PC-3 (cell line): ENCODE measurements at regions of chr6 and their contacts with region 1.

Region 1: DNA sequence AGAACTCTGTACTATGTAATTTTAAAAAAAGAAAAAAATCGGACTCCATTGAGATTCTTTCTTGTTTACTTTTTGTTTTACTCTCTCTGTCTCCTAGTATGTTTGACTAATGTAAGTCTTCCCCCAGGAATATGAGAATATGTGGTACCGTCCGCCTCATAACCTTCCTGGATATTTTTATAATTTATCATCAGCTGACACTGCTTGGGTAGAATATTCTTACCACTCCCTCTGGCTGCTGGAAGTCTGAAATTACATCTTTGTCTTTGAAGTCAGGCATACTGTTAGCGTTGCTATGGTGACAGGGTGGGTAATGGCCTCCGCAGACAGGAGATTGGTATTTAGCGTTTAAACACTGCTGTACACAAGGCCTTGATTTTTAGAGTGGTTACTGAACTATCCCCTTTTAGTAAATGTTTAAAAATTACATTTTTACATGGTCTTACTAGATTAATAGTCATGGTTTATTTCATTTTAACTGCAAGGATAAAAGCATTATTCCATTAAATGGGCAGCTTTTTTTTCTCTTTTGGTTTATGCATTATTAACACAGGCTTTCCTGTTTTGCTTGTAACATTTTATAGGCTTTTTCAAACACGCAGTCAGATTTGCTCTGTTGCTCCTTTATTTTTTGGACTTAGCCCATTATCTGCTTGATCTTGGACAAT is 176.4 kb downstream of the ARID1B start:
- DNase-seq: peak; percentile 89
- ATAC-seq: peak; percentile 61
- H3K4me3 ChIP-seq: peak overlapping the region; percentile 34; the same call in 1 of the 2 replicates
- H3K27ac ChIP-seq: peak overlapping the region; percentile 61
- H3K4me1 ChIP-seq: peaks cover 68% of the 10 kb centered on the region
- H3K27me3 ChIP-seq: no peaks in the 10 kb centered on the region
- CTCF ChIP-seq: peak; percentile 41; the same call in 1 of the 2 replicates

Region 2: DNA sequence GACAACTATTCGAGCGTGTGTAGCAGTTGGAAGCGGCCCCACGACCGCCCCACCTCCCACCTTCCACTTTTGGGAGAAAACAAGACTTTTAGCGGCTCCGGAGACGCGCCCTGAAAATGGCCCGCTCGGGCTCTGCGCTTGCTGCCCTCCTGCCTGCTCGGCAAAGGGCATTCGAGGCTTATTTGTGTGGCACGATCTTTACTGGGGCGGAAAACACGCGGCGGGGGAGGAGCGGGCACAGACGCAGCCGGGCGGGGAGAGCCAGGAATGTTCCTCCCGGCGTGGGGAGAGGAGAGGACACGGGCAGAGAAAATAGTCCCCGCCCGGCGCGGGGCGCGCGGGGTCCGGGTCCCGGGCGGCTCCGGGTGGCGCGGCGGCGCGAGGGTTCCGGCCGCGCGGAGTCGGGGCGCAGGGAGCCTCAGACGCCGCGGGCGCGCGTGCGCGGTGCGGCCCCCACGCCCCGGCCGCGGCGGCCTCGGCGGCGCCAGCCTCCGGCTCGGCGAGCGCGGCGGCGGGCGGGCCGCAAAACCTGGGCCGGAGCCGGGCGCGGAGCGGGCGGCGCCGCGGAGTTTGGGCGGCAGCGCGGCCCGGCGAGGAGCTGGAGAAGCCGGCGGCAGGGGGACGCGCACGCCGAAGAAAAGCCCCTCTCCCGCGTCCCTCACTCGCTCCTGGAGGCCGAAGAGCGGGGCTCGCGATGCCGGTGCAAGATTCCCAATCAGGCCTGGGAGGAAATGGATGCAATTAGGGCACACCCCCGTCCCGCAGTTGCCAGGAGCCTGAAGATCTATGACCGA is 266.4 kb before region 1 on chr6:
- CTCF ChIA-PET with region 1: no interaction called
- POLR2A ChIA-PET with region 1: no interaction called
- intact Hi-C with region 1: loop called (anchors 10 kb)
- DNase-seq: peak; percentile 73
- ATAC-seq: peak; percentile 87
- H3K4me3 ChIP-seq: peak overlapping the region; percentile 91
- H3K27ac ChIP-seq: peak overlapping the region; percentile 90
- H3K4me1 ChIP-seq: peaks cover 16% of the 10 kb centered on the region
- H3K27me3 ChIP-seq: no peaks in the 10 kb centered on the region
- CTCF ChIP-seq: no peak

Region 3: GRCh38 chr6:156866220-156867015 is 87.2 kb before region 1 on chr6:
- CTCF ChIA-PET with region 1: no interaction called
- POLR2A ChIA-PET with region 1: no interaction called
- intact Hi-C with region 1: loop called (anchors 5 kb)
- DNase-seq: peak; percentile 61
- ATAC-seq: peak; percentile 90
- H3K4me3 ChIP-seq: peak overlapping the region; percentile 53
- H3K27ac ChIP-seq: peak overlapping the region; percentile 58
- H3K4me1 ChIP-seq: peaks cover 20% of the 10 kb centered on the region
- H3K27me3 ChIP-seq: no peaks in the 10 kb centered on the region
- CTCF ChIP-seq: peak; percentile 40

Region 4: DNA sequence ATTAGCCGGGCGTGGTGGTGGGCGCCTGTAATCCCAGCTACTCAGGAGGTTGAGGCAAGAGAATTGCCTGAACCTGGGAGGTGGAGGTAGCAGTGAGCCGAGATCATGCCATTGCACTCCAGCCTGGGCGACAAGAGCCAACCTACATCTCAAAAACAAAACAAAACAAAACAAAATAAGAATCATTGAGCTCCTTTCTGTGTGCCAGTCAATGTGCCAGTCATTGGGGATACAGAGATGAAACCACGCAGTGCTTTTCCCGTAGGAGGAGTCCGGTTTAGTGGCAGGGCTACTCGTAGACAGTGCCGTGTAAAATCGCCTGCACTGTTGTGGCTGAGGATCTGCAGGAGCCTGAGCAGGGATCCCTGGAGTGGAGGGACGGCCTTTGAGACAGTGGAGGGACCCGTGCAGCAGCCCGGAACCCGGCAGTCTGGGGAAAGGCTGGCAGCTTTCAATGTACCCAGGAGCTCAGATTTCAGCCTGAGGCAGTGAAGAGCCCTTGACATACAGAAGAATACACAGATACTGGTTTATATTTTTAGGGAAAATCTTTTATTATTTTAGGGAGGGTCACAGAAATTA is 26.8 kb after region 1 on chr6:
- CTCF ChIA-PET with region 1: no interaction called
- POLR2A ChIA-PET with region 1: no interaction called
- intact Hi-C with region 1: loop called (anchors 2 kb)
- DNase-seq: peak; percentile 66
- ATAC-seq: peak; percentile 94
- H3K4me3 ChIP-seq: peak overlapping the region; percentile 7; the same call in 1 of the 2 replicates
- H3K27ac ChIP-seq: peak overlapping the region; percentile 61
- H3K4me1 ChIP-seq: peaks cover 38% of the 10 kb centered on the region
- H3K27me3 ChIP-seq: no peaks in the 10 kb centered on the region
- CTCF ChIP-seq: no peak

Region 5: GRCh38 chr6:156988276-156989158 is 34.9 kb after region 1 on chr6:
- CTCF ChIA-PET with region 1: no interaction called
- POLR2A ChIA-PET with region 1: no interaction called
- intact Hi-C with region 1: loop called (anchors 5 kb)
- DNase-seq: no peak
- ATAC-seq: no peak
- H3K4me3 ChIP-seq: no peak overlapping the region
- H3K27ac ChIP-seq: no peak overlapping the region
- H3K4me1 ChIP-seq: peaks cover 43% of the 10 kb centered on the region
- H3K27me3 ChIP-seq: no peaks in the 10 kb centered on the region
- CTCF ChIP-seq: no peak

Region 6: DNA sequence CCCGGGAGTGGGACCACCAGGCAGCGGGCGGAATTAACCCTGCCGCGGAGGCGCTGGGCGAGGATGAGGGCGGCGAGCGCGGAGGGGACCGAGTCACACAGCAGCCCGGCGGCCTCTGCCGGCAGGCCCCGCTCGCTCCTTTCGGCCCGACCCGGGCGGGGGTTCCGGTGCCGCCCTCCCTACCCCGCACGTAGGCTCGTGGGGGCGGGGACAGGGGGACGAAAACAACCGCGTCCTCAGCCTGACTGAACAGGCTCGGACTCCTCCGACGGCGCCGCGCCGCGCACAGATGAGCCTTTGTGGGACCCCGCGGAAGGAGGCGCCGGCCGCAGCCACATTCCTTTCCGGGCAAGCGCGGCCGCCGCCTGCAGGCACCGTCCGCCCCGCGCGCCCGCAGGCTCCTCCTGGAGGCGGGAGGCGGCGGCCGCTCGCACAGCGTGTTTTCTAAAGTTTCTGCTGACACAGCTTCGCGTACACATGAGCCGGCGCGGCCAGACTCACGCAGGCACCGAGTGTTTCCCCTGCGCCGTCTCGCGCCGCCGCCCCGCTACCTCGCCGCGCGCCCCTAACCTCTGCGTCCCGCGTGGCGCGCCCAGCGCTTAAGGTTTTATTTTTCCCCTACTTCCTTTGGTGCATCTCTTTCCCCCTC is 67.9 kb after region 1 on chr6:
- CTCF ChIA-PET with region 1: no interaction called
- POLR2A ChIA-PET with region 1: interaction called, 6 read pairs
- intact Hi-C with region 1: loop called (anchors 2 kb)
- DNase-seq: peak; percentile 80
- ATAC-seq: peak; percentile 84
- H3K4me3 ChIP-seq: peak overlapping the region; percentile 92
- H3K27ac ChIP-seq: peak overlapping the region; percentile 90
- H3K4me1 ChIP-seq: peaks cover 8% of the 10 kb centered on the region
- H3K27me3 ChIP-seq: no peaks in the 10 kb centered on the region
- CTCF ChIP-seq: peak; percentile 40; the same call in 1 of the 2 replicates

Region 7: DNA sequence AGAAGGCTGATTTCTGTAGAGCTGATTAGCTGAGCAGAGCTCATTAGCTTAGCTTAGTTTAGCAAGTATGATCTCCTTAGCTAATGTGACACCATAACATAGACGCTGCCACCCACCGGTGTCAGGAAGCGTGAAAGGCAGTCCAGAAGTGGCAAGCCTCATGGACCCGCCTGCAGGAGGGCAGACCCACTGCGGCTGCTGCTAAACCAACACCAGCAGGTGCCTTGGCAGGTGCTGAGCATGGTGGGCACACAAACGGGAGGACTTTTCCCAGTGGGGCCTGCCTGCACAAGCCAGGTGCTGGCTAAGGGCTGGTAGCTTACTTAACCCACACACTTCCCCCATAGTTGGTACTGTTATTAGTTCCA is 450.1 kb after region 1 on chr6:
- CTCF ChIA-PET with region 1: no interaction called
- POLR2A ChIA-PET with region 1: no interaction called
- intact Hi-C with region 1: no loop called
- DNase-seq: no peak
- ATAC-seq: no peak
- H3K4me3 ChIP-seq: no peak overlapping the region
- H3K27ac ChIP-seq: no peak overlapping the region
- H3K4me1 ChIP-seq: peaks cover 6% of the 10 kb centered on the region; the same call in 1 of the 2 replicates
- H3K27me3 ChIP-seq: no peaks in the 10 kb centered on the region
- CTCF ChIP-seq: no peak